ENCODE measurements at regions of chr2 and their contacts with region 1.

Region 1: DNA sequence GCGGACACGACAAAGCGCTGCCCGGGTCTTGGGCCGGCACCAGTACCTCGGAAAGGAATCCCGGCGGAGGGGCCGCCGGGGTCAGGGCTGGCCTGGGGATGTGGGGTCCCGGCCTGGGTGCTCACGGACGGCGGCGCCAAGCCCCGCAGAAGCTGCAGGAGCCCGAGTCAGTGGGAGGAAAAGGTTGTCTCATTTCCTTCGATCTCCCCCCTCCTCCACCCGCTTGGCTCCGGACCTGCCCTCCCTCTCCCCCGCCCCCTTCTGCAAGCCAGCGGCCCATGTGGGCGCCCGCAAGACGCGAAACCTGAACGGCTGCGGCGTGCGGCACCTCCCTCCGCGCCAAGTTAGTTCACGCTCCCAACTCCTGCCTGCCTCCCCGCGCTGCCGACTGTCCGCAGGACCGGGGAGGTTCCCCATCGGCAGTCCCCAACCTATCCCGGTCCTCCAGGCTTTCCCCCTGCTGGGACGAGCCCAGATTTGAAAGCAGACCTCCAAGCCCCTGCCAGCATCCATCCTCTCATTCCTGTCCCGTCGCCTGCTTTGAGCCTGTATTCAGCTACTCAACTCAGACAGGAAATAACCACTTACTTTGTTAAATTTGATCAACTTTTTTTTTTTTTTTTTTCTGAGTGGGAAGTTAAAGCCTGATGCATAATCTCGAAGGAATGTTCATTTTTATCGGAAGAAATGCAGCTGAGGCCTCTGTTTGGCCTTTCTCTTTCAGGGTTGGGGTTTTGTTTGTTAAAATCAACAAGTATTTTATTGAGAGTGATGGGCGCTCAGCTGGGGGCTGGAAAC is at the start of gene EVA1A:
- DNase-seq: peak; percentile 81
- ATAC-seq: peak; percentile 75
- H3K4me3 ChIP-seq: peak within 1 kb of the TSS; percentile 88
- H3K27ac ChIP-seq: peak within 1 kb of the TSS; percentile 99
- H3K4me1 ChIP-seq: peaks cover 13% of the 10 kb centered on the region
- H3K27me3 ChIP-seq: no peaks in the 10 kb centered on the region
- CTCF ChIP-seq: no peak
- POLR2A ChIP-seq: peak; percentile 72
- RAD21 ChIP-seq: peak; percentile 2; the same call in 1 of the 2 replicates
- total RNA-seq, gene EVA1A: 89.2 and 93.7 TPM in 2 replicates

Region 2: GRCh38 chr2:75489721-75490120 is 71.2 kb before region 1 on chr2:
- CTCF ChIA-PET with region 1: no interaction called
- POLR2A ChIA-PET with region 1: no interaction called
- dilution Hi-C with region 1: no loop called
- in situ Hi-C with region 1: no loop called
- intact Hi-C with region 1: loop called (anchors 5 kb)
- DNase-seq: no peak
- ATAC-seq: no peak
- H3K4me3 ChIP-seq: no peak overlapping the region
- H3K27ac ChIP-seq: no peak overlapping the region
- H3K4me1 ChIP-seq: no peaks in the 10 kb centered on the region
- H3K27me3 ChIP-seq: no peaks in the 10 kb centered on the region
- CTCF ChIP-seq: no peak
- POLR2A ChIP-seq: no peak
- RAD21 ChIP-seq: no peak

Region 3: GRCh38 chr2:75587954-75588587 is 27.1 kb after region 1 on chr2:
- CTCF ChIA-PET with region 1: interaction called, 3 read pairs
- POLR2A ChIA-PET with region 1: no interaction called
- dilution Hi-C with region 1: no loop called
- in situ Hi-C with region 1: no loop called
- intact Hi-C with region 1: loop called (anchors 2 kb)
- DNase-seq: peak; percentile 94
- ATAC-seq: peak; percentile 85
- H3K4me3 ChIP-seq: peak overlapping the region; percentile 13; the same call in 1 of the 2 replicates
- H3K27ac ChIP-seq: peak overlapping the region; percentile 53; the same call in 1 of the 2 replicates
- H3K4me1 ChIP-seq: peaks cover 7% of the 10 kb centered on the region
- H3K27me3 ChIP-seq: no peaks in the 10 kb centered on the region
- CTCF ChIP-seq: no peak
- POLR2A ChIP-seq: no peak
- RAD21 ChIP-seq: no peak

Region 4: DNA sequence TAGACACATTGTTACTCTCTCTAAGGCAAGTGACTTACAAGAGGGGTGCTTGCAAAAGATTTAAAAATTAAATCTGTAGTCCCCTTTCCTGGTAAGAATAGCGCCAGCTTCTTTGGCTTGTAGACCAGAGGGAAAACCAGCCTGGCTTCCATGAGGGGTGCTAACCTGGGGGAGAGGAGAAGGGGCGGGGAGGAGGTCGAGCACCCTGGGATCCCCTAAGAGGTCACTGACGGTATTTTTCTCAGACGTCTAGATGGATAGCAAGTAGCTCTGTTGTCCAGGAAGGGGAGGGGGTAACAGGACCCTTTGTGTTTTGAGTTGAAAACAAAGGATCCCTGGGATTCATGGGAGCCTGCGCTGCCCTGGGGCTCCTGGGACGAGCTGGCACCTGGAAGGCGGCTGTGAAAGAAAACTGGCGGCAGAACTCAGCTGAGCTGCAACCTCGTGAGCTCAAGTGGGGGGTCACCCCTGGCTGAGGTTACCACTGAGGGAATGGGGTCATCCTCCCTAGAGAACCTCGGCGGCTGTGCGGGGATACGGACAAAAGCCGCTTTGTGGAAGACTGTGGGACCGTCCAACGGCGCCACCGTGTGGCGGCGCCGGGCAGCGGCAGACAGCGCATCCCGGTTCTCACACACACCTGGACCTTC is 47.8 kb after region 1 on chr2:
- CTCF ChIA-PET with region 1: interaction called, 15 read pairs
- POLR2A ChIA-PET with region 1: interaction called, 4 read pairs
- dilution Hi-C with region 1: no loop called
- in situ Hi-C with region 1: loop called (anchors 5 kb)
- intact Hi-C with region 1: loop called (anchors 1 kb)
- DNase-seq: peak; percentile 47
- ATAC-seq: peak; percentile 67
- H3K4me3 ChIP-seq: peak overlapping the region; percentile 22; the same call in 1 of the 2 replicates
- H3K27ac ChIP-seq: no peak overlapping the region
- H3K4me1 ChIP-seq: peaks cover 13% of the 10 kb centered on the region
- H3K27me3 ChIP-seq: peaks cover 24% of the 10 kb centered on the region
- CTCF ChIP-seq: peak; percentile 89
- POLR2A ChIP-seq: peak; percentile 34; the same call in 1 of the 2 replicates
- RAD21 ChIP-seq: peak; percentile 95

Region 5: DNA sequence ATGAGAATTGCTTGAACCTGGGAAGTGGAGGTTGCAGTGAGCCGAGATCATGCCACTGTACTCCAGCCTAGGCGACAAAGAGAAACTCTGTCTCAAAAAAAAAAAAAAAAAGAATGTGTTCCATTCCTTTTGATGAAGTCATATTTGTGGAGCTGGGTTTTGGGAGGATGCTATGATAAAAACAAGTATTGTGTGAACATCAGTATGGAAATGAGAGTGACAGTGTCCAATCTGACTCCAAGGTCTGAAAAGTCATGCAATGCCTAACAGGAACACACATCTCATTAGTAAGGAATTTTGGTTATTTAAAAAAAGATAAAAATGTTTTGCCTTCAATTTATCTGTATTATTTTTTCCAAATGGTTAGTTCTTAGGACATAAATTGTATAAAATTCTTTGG is 138.0 kb after region 1 on chr2:
- CTCF ChIA-PET with region 1: no interaction called
- POLR2A ChIA-PET with region 1: no interaction called
- dilution Hi-C with region 1: no loop called
- in situ Hi-C with region 1: no loop called
- intact Hi-C with region 1: no loop called
- DNase-seq: peak; percentile 38
- ATAC-seq: peak; percentile 83
- H3K4me3 ChIP-seq: no peak overlapping the region
- H3K27ac ChIP-seq: no peak overlapping the region
- H3K4me1 ChIP-seq: no peaks in the 10 kb centered on the region; the same call in 1 of the 2 replicates
- H3K27me3 ChIP-seq: no peaks in the 10 kb centered on the region
- CTCF ChIP-seq: no peak
- POLR2A ChIP-seq: no peak
- RAD21 ChIP-seq: no peak

Measured in IMR-90 (cell line).